CD14-positive monocyte (primary cell): ENCODE measurements at regions of chr15 and their contacts with region 1.

Region 1: DNA sequence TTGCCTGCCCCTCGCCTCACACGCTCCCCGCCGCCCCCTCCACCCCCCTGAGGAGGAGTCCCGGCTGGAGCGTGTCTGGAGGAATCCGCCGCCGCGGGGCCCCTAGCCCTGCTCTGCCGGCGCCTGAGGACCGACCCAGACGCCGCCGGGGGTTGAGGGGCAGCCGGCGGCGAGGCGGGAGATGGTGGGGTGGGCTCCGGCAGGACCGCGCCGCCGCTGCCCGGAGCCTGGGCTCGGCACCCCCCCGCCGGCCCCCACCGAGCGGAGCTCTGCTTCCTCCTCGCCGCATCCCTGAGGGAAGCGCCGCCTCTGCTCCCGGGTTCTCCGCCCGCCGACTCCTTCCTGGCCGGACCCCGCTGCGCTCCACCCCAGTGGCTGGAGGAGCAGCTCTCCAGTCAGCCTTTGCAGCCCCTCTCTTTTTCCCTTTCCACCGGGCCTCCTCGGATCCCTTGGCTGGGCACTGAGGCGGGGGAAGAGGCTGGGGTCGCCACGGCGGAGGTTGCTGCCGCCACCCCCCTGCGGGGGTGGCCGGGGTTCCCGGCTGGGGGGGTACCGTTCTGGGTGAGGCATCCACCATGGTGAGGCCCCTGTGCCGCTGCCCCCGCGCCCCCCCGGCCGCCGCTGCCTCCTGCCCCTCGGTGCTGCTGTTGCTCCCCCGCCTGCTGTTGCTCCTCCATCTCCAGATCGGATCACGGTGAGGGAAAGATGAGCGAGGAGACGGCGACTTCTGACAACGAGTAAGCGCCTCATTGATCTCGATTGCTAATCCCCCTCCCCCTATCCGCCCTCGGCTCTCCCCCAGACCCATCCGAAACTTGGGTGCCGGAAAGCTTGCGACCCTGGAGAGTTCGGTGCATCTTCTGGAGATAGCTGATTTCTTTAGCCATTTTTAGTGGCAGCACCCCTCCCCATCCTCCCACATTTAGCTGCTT is at the start of gene SPRED1:
- DNase-seq: peak in 2 of 3 donors; percentile 12 to 29
- H3K4me3 ChIP-seq: peak within 1 kb of the TSS; percentile 71 to 85 (median 85)
- H3K4me3 Mint-ChIP-seq: peak within 1 kb of the TSS; percentile 92 to 98
- H3K27ac ChIP-seq: peak within 1 kb of the TSS; percentile 51 to 80
- H3K27ac Mint-ChIP-seq: peak within 1 kb of the TSS; percentile 71 to 91 (median 83)
- H3K4me1 ChIP-seq: peaks cover 31 to 39% of the 10 kb centered on the region in 2 donors
- H3K4me1 Mint-ChIP-seq: peaks cover 31% of the 10 kb centered on the region
- H3K27me3 ChIP-seq: peaks cover 20 to 23% of the 10 kb centered on the region in 2 donors
- H3K27me3 Mint-ChIP-seq: peaks cover 14 to 34% (median 18%) of the 10 kb centered on the region in 3 donors
- CTCF ChIP-seq: no peak
- polyA plus RNA-seq, gene SPRED1: 2.5 to 3.3 (median 3.2) TPM

Region 2: DNA sequence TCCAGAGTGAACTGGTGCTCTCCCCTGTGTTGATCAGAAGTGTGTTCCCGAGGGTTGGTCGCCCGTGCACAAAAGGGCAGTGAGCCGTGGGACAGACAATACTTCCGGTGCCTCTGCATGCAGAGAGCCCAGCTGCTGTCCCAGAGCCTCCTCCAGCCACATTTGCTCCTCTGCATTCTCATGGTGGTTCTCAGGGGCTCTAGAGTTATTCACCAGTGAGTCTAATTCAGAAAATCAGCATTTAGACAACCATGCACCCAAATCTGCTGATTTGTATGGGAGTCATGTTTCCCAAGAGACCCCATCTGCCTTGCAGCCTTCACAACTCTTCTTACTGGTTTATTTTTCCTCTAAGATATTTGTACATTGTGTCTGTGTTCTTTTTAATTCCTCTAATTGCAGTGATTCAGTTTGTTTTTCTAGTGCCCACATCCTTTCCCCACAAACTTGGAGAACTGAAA is 107.1 kb before region 1 on chr15:
- intact Hi-C with region 1: no loop called
- DNase-seq: no peak
- H3K4me3 ChIP-seq: no peak overlapping the region
- H3K4me3 Mint-ChIP-seq: no peak overlapping the region
- H3K27ac ChIP-seq: no peak overlapping the region
- H3K27ac Mint-ChIP-seq: no peak overlapping the region
- H3K4me1 ChIP-seq: no peaks in the 10 kb centered on the region
- H3K4me1 Mint-ChIP-seq: peaks cover 5% of the 10 kb centered on the region
- H3K27me3 ChIP-seq: no peaks in the 10 kb centered on the region
- H3K27me3 Mint-ChIP-seq: peaks cover 4 to 8% (median 6%) of the 10 kb centered on the region in 3 donors
- CTCF ChIP-seq: no peak

Region 3: GRCh38 chr15:38297623-38298388 is 45.1 kb after region 1 on chr15:
- intact Hi-C with region 1: loop called in 1 of 2 experiments (anchors 5 kb)
- DNase-seq: no peak
- H3K4me3 ChIP-seq: no peak overlapping the region
- H3K4me3 Mint-ChIP-seq: no peak overlapping the region
- H3K27ac ChIP-seq: no peak overlapping the region
- H3K27ac Mint-ChIP-seq: no peak overlapping the region
- H3K4me1 ChIP-seq: peaks cover 0 to 3% of the 10 kb centered on the region in 2 donors
- H3K4me1 Mint-ChIP-seq: peaks cover 14% of the 10 kb centered on the region
- H3K27me3 ChIP-seq: no peaks in the 10 kb centered on the region
- H3K27me3 Mint-ChIP-seq: peaks cover 0 to 1% (median 0%) of the 10 kb centered on the region in 3 donors
- CTCF ChIP-seq: no peak